Natural killer cell (primary cell): ENCODE measurements at regions of chr11 and their contacts with region 1.

Region 1: GRCh38 chr11:128884703-128885338 is 6.3 kb upstream of the KCNJ5 start:
- DNase-seq: peak; percentile 37 to 83
- ATAC-seq: peak; percentile 68 to 89 (median 83)
- H3K4me3 ChIP-seq: no peak overlapping the region
- H3K4me3 Mint-ChIP-seq: no peak overlapping the region
- H3K27ac ChIP-seq: no peak overlapping the region
- H3K27ac Mint-ChIP-seq: no peak overlapping the region
- H3K4me1 ChIP-seq: peaks cover 12% of the 10 kb centered on the region
- H3K4me1 Mint-ChIP-seq: peaks cover 19 to 23% of the 10 kb centered on the region in 2 donors
- H3K27me3 ChIP-seq: peaks cover 26% of the 10 kb centered on the region
- H3K27me3 Mint-ChIP-seq: peaks cover 48 to 81% of the 10 kb centered on the region in 2 donors
- CTCF ChIP-seq: peak; percentile 90

Region 2: DNA sequence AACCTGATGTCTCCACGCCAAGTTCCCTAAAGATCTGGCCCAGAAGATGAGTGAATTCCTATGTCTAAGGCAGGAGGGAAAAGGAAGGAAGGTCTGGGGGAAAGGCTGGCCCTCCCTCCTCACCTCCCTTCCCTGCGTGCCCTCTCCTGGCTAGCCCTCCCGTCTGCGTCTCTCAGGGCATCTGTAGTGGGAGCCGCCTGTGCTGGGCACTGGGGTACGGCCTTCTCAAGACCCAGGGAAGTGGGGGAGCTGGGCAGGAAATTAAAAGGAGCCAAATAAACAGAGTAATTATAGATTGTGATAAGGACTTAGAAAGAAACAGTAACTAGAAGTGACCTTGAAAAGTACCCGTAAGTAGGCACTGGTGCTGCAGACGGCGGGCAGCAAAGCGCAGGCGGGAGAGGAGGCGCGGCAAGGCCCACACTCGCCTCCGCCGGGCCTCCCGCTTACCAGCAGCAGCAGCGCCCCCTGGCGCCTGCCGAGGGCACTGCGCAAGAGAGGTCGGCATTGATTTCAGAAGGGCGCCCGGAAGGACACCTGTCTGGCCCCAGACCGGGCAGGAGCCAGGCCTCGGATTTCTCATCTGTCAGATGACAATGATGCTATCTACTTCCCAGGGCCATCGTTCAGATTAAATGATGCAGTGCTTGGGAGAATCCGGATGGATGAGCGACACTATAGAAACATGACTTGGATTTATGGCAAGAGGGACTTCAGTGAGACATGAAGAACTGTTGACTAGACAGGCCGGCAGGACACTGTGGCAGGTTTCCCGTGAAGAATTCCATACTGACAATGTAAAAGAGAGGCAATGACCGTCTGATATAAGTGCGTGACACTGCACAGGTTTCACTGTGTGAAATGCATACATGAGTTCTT is 25.0 kb before region 1 on chr11:
- intact Hi-C with region 1: no loop called
- DNase-seq: peak; percentile 76 to 87
- ATAC-seq: peak; percentile 88 to 98 (median 97)
- H3K4me3 ChIP-seq: no peak overlapping the region
- H3K4me3 Mint-ChIP-seq: no peak overlapping the region
- H3K27ac ChIP-seq: no peak overlapping the region
- H3K27ac Mint-ChIP-seq: no peak overlapping the region
- H3K4me1 ChIP-seq: peaks cover 8% of the 10 kb centered on the region
- H3K4me1 Mint-ChIP-seq: peaks cover 8 to 9% of the 10 kb centered on the region in 2 donors
- H3K27me3 ChIP-seq: no peaks in the 10 kb centered on the region
- H3K27me3 Mint-ChIP-seq: peaks cover 0 to 14% of the 10 kb centered on the region in 2 donors
- CTCF ChIP-seq: peak; percentile 99

Region 3: DNA sequence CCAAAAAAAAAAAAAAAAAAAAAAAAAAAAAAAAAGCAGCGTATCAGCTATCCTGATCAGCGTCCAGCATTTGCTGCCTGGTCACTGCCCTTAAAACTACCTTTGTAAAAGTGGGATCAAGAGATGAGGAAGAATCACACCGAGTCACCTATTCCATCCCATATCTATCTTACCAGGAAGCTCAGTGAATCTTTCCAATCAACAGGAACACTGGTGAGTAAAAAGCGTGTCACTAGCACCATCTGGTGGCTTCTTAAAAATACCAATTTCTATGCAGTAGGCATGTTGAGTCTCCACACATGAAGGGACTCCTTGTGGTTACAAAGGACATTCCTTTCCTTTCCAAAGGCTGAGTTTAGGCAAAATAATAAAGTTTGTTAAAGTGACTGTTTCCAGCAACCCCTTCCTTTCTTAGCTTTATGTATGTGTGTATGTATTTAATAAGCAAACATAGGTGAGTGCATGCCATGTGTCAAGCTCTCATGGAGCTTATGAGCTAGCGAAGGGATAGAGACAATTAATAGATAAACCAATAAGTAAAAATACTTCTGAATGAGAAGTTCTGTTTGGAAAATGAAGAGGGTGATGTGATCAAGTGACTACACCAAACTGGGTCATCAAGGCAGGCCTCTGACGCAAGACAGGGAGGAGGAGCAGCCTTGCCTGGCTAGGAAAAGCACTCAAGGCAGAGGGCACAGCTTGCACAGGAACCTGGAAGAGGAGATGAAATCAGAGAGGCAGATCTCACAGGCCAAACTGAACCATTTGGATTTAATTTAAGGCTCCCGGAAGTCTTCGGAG is 71.8 kb after region 1 on chr11:
- intact Hi-C with region 1: loop called (anchors 1 kb)
- DNase-seq: peak in 1 of 2 donors; percentile 70
- ATAC-seq: peak in 2 of 3 donors; percentile 57 to 69
- H3K4me3 ChIP-seq: no peak overlapping the region
- H3K4me3 Mint-ChIP-seq: no peak overlapping the region
- H3K27ac ChIP-seq: no peak overlapping the region
- H3K27ac Mint-ChIP-seq: no peak overlapping the region
- H3K4me1 ChIP-seq: no peaks in the 10 kb centered on the region
- H3K4me1 Mint-ChIP-seq: peaks cover 0 to 6% of the 10 kb centered on the region in 2 donors
- H3K27me3 ChIP-seq: no peaks in the 10 kb centered on the region
- H3K27me3 Mint-ChIP-seq: peaks cover 26 to 45% of the 10 kb centered on the region in 2 donors
- CTCF ChIP-seq: peak; percentile 77

Region 4: DNA sequence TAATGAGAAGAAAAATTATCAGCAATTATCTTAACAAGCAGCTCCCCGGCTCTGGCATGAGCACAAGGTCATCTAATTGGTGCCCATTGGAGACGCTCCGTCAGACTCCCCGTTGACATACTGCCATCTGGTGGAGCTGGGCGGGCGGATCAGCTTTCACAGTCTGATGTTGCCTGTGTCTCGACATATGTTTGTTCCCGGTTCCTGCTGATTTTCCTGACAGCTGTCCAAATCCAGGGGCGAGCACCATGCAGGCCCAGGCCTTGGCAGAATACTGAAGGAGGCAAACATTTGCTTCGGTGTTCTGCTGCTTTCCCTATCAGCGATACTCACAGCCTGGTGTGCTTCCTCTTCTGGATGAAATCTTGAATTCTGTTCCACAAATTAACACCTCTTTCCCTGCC is 447.1 kb after region 1 on chr11:
- intact Hi-C with region 1: loop called (anchors 5 kb)
- DNase-seq: peak; percentile 39 to 71
- ATAC-seq: peak; percentile 47 to 84 (median 59)
- H3K4me3 ChIP-seq: no peak overlapping the region
- H3K4me3 Mint-ChIP-seq: no peak overlapping the region
- H3K27ac ChIP-seq: no peak overlapping the region
- H3K27ac Mint-ChIP-seq: no peak overlapping the region
- H3K4me1 ChIP-seq: no peaks in the 10 kb centered on the region
- H3K4me1 Mint-ChIP-seq: peaks cover 0 to 4% of the 10 kb centered on the region in 2 donors
- H3K27me3 ChIP-seq: no peaks in the 10 kb centered on the region
- H3K27me3 Mint-ChIP-seq: no peaks in the 10 kb centered on the region
- CTCF ChIP-seq: peak; percentile 69